Posterior vena cava (tissue), 2 donors: ENCODE measurements at regions of chr17 and their contacts with region 1.

Region 1: GRCh38 chr17:49779739-49780231 is 8.7 kb upstream of the KAT7 start:
- DNase-seq: no peak

Region 2: DNA sequence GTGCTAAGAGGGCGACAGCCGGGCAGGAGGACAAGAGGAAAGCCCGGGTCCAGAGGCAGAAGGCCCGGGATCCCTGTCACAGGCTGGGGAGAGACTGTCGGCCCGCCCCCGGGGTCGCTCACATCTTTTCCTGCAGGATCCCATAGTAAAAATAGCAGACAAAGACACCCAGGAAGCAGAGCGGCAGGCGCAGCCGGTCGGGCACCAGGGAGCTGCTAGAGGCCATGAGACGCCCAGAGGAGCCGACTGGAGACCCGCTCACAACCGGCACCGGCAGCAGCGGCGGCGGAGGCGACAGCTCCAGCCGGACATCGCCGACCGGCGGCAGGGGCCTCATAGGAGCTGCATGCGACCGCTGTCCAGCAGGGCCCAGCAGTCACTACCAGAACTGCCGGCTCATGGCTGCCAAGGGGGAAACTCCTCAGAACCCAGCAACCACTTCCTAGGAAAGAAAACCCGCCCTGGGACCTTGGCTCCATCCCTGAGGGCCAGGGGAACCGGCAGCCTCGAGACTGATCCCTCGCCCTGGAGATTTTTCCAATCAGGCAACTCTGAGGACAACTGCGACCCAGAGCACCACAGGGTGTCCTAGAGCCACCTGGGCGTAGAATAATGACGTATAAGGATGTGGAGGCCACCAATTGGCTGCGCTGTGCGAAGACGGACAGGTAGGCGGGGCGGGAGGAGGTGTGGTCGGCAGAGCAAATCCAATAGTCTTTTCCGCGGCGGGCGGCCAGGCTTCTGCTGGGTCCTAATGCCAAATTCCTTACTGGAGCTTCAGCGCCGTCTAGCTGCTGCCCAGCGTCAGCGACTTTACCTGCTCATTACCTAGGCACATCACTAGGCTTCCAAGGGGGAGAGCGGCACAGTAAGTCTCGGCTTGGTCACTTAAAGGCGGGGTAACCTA is 71.9 kb before region 1 on chr17 and contains the start of gene SLC35B1:
- intact Hi-C with region 1: loop called in 1 of 2 experiments (anchors 5 kb)
- DNase-seq: peak; percentile 100
- total RNA-seq, gene SLC35B1: 28.1 to 33.3 TPM

Region 3: GRCh38 chr17:49730078-49730784 is 49.6 kb before region 1 on chr17:
- intact Hi-C with region 1: loop called in 1 of 2 experiments (anchors 5 kb)
- DNase-seq: peak; percentile 95

Region 4: DNA sequence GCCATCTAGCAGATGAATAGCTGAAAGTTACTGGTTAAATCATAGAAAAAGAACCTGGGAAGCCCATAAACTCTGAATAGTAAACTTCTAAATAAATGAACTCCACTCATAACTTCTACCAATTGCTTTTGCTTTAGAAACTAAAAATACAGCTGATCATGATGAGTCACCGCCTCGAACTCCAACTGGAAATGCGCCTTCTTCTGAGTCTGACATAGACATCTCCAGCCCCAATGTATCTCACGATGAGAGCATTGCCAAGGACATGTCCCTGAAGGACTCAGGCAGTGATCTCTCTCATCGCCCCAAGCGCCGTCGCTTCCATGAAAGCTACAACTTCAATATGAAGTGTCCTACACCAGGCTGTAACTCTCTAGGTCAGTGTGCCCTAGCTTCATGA is 18.4 kb after region 1 on chr17:
- intact Hi-C with region 1: no loop called
- DNase-seq: no peak